Activated naive CD4-positive, alpha-beta T cell treated with anti-CD3 and anti-CD28 coated beads for 36 hours (primary cell): ENCODE measurements at regions of chr9 and their contacts with region 1.

Region 1: GRCh38 chr9:21616082-21616778 is 134.1 kb upstream of the IFNE start:
- DNase-seq: no peak
- H3K4me3 Mint-ChIP-seq: no peak overlapping the region
- H3K27ac Mint-ChIP-seq: no peak overlapping the region
- H3K4me1 Mint-ChIP-seq: peaks cover 46% of the 10 kb centered on the region
- H3K27me3 Mint-ChIP-seq: no peaks in the 10 kb centered on the region

Region 2: DNA sequence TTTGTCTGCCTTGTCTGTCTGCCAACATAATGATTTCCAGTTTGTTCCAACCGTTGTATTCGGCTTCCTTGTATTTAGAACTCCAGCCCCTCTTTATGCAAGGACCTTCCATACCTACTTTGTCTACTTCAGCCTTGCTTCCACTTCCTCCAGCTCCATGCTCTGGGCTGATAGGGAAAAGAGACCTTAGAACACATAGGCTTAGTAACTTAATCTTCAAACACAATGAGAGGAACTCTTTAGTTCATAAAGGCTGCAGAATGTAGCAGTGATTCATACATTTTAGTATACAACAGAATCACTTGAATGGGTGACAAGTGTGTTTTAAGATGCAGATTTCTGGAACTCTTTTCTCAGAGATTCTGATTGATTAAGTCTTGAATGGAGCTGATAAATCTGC is 31.3 kb before region 1 on chr9:
- CTCF ChIA-PET with region 1: no interaction called
- intact Hi-C with region 1: no loop called
- DNase-seq: no peak
- H3K4me3 Mint-ChIP-seq: no peak overlapping the region
- H3K27ac Mint-ChIP-seq: no peak overlapping the region
- H3K4me1 Mint-ChIP-seq: peaks cover 8% of the 10 kb centered on the region
- H3K27me3 Mint-ChIP-seq: no peaks in the 10 kb centered on the region

Region 3: DNA sequence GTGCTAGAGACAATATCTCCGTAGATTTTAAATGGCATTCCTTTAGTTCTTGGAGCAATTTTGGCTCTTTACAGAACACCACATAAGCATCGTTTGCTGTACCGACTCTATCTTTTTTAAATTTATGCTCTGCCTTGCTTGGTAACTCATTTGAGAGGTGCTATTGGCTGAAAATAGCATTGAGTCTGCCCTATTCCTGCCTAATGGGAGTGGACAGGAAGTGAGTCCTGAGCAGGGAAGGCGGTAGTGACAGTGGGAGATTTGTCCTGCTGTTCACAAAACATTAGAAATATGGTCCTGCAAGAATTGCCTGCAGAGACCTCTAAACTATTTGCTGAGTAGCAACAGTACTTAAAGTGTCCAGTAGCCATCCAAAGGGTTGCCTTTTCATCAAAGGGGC is 18.9 kb before region 1 on chr9:
- CTCF ChIA-PET with region 1: no interaction called
- intact Hi-C with region 1: no loop called
- DNase-seq: no peak
- H3K4me3 Mint-ChIP-seq: no peak overlapping the region
- H3K27ac Mint-ChIP-seq: no peak overlapping the region
- H3K4me1 Mint-ChIP-seq: peaks cover 4% of the 10 kb centered on the region
- H3K27me3 Mint-ChIP-seq: no peaks in the 10 kb centered on the region

Region 4: DNA sequence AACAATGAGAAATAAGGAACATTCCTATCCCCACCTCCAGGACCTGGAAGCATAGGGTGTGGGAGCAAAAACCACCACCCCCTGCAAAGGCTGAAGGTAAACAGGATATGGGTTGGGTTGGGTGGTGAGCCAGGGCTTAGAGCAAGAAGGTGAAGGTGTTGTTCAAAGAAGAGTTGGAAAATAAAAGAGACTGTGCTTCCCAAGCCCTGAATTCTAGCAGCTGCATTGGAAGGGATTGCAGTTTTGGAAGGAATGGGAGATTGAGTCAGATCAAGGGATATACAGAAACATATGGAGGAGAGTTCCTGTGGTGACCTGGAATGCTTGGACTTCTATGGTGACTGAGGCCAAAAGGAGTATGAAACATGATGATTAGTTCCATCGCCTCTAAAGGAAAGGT is 161.5 kb after region 1 on chr9:
- CTCF ChIA-PET with region 1: no interaction called
- intact Hi-C with region 1: loop called (anchors 5 kb)
- DNase-seq: no peak
- H3K4me3 Mint-ChIP-seq: no peak overlapping the region
- H3K27ac Mint-ChIP-seq: no peak overlapping the region
- H3K4me1 Mint-ChIP-seq: peaks cover 3% of the 10 kb centered on the region
- H3K27me3 Mint-ChIP-seq: no peaks in the 10 kb centered on the region